Calu3 (cell line): ENCODE measurements at regions of chr2 and their contacts with region 1.

Region 1: GRCh38 chr2:240586198-240586918 is at the start of gene CAPN10:
- DNase-seq: peak; percentile 98
- H3K4me3 Mint-ChIP-seq: peak within 1 kb of the TSS; percentile 94
- H3K27ac Mint-ChIP-seq: peak within 1 kb of the TSS; percentile 84
- H3K4me1 Mint-ChIP-seq: peaks cover 38% of the 10 kb centered on the region
- H3K27me3 Mint-ChIP-seq: no peaks in the 10 kb centered on the region
- CTCF ChIP-seq: no peak
- total RNA-seq, gene CAPN10: 49.3 and 52.6 TPM in 2 replicates

Region 2: DNA sequence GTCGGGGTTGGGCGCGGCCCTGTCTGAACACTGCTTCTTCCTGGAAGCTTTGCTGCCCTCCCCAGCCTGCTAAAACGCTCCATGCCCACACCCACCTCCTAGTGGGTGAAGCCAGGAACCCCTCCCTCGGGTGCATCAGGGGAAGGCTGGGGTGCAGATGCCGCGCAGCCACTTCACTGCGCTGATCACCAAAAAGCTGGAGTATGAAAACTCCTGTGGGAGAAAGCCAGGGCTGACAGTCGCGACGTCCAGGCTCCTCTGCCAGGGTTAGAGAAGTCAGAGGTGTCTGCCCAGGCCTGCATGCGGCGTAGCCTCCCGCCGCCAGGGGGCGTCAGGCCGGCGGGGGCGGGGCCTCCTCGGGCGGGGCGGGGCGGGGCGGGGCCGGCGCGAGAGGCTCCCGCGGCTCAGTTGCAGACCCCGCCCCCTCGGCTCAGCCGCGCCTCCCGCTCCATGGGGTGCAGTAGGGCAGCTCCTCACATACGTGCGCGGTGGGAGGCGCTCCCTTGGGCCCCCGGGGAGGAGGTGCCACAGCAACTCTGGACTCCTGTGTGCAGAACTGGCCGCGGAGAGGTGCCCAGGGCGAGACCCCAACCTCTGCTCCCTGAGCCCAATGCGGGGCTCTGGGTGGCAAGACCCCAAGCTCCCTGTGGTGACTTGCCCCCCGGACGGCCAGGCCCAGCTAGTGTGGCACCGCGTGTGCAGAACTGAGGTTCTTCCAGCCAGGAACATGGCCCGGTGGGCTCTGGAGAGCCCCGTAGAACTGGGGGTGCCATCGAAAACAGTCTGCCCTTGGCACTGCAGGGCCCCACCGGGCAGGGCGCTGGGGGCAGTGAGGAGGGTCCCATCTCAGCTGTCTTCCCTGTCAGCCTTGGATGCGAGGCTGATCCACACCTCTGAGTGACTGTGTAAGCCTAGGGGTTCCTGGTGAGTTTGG is 19.9 kb before region 1 on chr2:
- CTCF ChIA-PET with region 1: interaction called, 24 read pairs
- intact Hi-C with region 1: no loop called
- DNase-seq: peak; percentile 97
- H3K4me3 Mint-ChIP-seq: peak overlapping the region; percentile 85
- H3K27ac Mint-ChIP-seq: peak overlapping the region; percentile 97
- H3K4me1 Mint-ChIP-seq: peaks cover 41% of the 10 kb centered on the region
- H3K27me3 Mint-ChIP-seq: no peaks in the 10 kb centered on the region
- CTCF ChIP-seq: peak; percentile 95

Region 3: DNA sequence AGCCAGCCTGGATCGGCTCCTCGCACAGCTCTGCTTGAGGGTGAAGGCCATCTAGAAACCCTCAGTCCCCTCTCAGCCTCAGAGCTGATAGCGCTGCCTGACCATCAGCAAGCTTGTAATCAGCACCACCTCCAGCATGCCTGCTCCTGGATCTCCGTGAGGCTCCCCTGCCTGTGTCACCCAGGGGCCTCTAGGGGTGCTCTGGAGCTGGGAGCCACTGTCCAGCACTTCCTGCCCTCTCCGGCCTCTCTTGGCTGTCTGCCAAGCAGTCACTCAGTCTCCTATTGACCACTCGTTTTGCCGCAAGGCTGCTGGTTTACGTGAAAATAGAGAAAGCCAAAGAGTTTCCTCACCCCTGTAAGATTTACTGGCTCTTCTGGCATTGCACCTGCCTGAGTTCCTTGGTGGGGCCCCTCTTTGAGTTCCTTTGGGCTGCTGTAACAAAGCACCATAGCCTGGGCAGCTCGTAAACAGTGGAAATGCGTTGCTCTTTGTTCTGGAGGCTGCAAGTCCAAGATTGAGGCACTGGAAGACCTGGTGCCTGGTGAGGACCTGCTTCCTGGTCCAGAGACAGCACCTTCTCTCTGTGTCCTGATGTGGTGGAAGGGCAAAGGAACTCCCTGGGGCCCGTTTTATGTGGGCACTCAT is 18.1 kb after region 1 on chr2:
- CTCF ChIA-PET with region 1: interaction called, 10 read pairs
- intact Hi-C with region 1: no loop called
- DNase-seq: peak; percentile 94
- H3K4me3 Mint-ChIP-seq: peak overlapping the region; percentile 70
- H3K27ac Mint-ChIP-seq: peak overlapping the region; percentile 75
- H3K4me1 Mint-ChIP-seq: peaks cover 45% of the 10 kb centered on the region
- H3K27me3 Mint-ChIP-seq: no peaks in the 10 kb centered on the region
- CTCF ChIP-seq: peak; percentile 80

Region 4: DNA sequence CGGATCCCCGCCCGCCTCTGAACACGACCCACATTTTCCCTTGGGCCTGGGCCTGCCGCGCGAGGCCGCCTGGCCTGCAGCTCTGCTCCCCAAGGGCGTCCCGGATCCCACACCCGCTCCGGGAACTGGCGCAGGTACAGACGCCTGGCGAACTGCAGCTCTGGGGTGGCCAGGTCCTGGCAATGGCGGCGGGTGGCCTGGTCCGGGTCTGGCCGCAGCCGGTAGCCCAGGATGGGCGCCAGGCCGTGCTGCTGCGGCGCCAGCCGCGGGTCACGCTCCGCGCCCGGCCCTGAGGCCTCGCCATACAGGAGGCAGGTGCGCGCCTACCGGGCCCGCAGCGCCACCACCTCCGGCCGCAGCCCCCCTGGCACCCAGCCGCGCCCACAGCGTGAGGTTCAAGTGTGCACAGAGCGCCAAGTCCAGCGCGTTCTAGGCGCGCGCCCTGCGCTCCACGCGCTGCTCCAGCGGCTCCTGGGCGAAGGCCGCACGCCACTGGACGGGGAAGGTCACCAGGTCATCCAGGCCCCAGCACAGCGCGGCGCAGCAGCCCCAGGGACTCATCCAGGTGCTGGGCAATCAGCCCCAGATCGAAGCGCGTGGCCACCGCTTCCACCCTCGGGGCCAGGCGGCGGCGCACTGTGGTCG is 114.9 kb after region 1 on chr2:
- CTCF ChIA-PET with region 1: no interaction called
- intact Hi-C with region 1: no loop called
- DNase-seq: no peak
- H3K4me3 Mint-ChIP-seq: no peak overlapping the region
- H3K27ac Mint-ChIP-seq: no peak overlapping the region
- H3K4me1 Mint-ChIP-seq: no peaks in the 10 kb centered on the region
- H3K27me3 Mint-ChIP-seq: peaks cover 47% of the 10 kb centered on the region
- CTCF ChIP-seq: no peak